ENCODE measurements at regions of chr16 and their contacts with region 1.

Region 1: GRCh38 chr16:84617791-84618580 is at the start of gene COTL1:
- DNase-seq: peak; percentile 97

Region 2: GRCh38 chr16:84511180-84511824 is 106.7 kb before region 1 on chr16:
- in situ Hi-C with region 1: loop called (anchors 10 kb)
- DNase-seq: peak; percentile 86

Measured in KBM-7 (cell line).